ENCODE measurements at regions of chr12 and their contacts with region 1.

Region 1: DNA sequence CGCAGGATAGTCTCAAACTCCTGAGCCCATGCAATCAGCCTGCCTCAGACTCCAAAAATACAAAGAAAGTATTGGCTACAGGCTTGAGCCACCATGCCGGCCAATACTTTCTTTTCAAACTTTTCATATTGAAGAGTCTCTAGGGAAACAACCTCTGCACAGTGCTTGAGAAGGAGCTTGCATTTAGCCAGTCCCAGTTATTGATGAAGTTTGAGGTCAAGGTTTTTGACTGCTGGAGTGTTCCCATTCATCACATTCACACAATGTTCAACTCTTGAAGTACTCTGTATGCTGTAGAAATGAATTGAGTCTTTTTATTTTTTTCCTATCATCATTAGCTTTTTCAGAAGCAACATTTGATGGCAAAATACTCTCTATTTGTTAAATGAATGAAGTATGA is 355.8 kb upstream of the E2F7 start:
- DNase-seq: no peak

Region 2: DNA sequence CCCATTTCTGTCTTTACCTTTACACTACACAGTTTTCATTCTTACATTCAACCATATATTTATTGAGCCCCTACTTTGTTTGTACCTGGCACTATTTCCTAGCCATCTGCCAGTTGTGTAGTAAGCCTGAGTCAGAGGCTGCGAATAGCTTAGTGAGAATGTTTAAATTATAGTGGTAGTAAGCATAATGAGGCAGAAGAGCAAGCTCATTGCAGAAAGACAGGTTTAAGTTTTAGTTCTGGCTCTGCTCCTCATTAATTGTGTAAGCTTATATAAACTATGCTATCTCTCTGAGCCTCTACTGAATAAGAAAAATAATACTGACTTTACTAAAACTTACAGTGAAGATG is 533.0 kb after region 1 on chr12:
- intact Hi-C with region 1: loop called in 1 of 2 experiments (anchors 5 kb)
- DNase-seq: no peak

Region 3: DNA sequence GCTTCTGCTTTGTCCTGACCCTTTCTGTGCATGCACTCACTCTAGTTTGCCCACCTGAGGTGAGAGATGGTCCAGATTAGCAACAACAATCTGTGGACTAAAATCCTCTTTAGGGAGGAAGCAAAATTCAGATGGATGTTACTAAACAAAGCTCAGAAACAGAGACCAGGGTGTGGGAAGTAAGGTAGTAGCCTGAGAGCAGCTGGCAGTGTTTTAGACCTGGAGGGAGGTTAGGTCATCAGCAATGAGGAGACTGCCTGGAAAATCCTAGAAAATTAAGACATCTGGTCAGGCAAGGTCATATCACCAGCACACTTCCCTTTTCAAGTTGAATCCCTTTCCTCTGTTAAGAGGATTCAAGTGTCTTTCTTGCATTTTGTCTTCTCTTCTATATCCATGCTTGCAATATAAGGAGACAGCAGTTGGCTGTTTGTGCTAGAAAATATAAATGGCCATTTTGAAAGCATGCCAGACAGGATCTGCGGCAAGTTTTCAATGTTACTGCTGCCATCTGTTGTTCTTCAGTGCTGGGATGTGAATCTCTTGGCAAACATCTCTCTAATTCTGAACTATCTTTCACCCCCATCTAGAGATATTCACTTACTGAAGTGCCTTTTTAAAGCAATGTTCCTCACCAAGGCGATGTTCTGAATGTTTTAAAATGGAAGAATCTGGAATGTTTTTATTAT is 675.9 kb after region 1 on chr12:
- intact Hi-C with region 1: no loop called
- DNase-seq: no peak